Dendritic cell treated with granulocyte-macrophage colony-stimulating factor and Interleukin-4, amounts not matched to agents 40 ng/mL and 50 ng/mL, for 4 days (primary cell): ENCODE measurements at regions of chr6 and their contacts with region 1.

Region 1: DNA sequence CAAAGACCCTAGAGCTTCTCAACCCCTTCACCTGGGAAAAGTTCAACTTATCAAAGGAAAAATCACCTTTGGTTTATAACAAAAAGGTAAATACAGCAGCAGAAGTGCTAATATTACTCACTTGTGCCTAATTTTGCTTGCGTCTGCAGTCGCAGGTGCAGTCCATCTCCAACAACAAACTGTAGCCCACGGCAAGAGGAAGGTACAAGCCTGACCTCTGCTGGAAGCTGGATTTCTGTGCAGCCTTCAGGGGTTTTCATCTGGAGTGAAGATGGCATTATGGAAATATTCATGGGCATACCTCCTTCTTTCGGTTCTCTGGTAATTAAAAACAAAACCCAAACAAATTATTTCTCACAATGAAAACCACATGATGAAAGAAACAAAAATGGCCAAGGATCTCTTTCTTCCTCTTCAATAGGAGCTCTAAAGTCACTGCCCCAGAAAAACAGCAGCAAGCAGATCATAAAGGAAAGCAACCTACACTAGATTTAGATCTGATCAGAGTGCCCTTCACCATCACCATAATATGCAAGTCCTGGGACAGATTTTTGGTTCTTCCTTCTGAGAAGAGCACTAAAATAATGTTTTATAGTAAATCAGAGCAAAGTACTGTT is 7.8 kb downstream of the UBE3D start:
- H3K4me3 Mint-ChIP-seq: no peak overlapping the region
- H3K27ac Mint-ChIP-seq: no peak overlapping the region
- H3K4me1 Mint-ChIP-seq: no peaks in the 10 kb centered on the region
- H3K27me3 Mint-ChIP-seq: no peaks in the 10 kb centered on the region

Region 2: GRCh38 chr6:82270881-82271645 is 786.8 kb before region 1 on chr6:
- intact Hi-C with region 1: loop called (anchors 2 kb)
- H3K4me3 Mint-ChIP-seq: no peak overlapping the region
- H3K27ac Mint-ChIP-seq: no peak overlapping the region
- H3K4me1 Mint-ChIP-seq: no peaks in the 10 kb centered on the region
- H3K27me3 Mint-ChIP-seq: no peaks in the 10 kb centered on the region